Sigmoid colon (tissue), 7 donors: ENCODE measurements at regions of chr9 and their contacts with region 1.

Region 1: GRCh38 chr9:131349881-131350563 is 43.9 kb upstream of the PRRC2B start:
- DNase-seq: peak; percentile 94
- H3K4me3 ChIP-seq: peak overlapping the region in 3 of 4 donors; percentile 20 to 33 (median 30)
- H3K27ac ChIP-seq: peak overlapping the region in 1 of 4 donors; percentile 34
- H3K4me1 ChIP-seq: peaks cover 0 to 9% (median 9%) of the 10 kb centered on the region in 4 donors
- H3K27me3 ChIP-seq: peaks cover 0 to 3% (median 0%) of the 10 kb centered on the region in 3 donors
- CTCF ChIP-seq: peak; percentile 85 to 92 (median 89)
- EP300 ChIP-seq: no peak
- POLR2A ChIP-seq: no peak

Region 2: GRCh38 chr9:131407717-131408195 is 57.7 kb after region 1 on chr9:
- intact Hi-C with region 1: loop called (anchors 5 kb)
- DNase-seq: peak; percentile 80
- H3K4me3 ChIP-seq: peak overlapping the region in 2 of 4 donors; percentile 16 to 26
- H3K27ac ChIP-seq: peak overlapping the region; percentile 74 to 97 (median 96)
- H3K4me1 ChIP-seq: peaks cover 0 to 99% (median 95%) of the 10 kb centered on the region in 4 donors
- H3K27me3 ChIP-seq: no peaks in the 10 kb centered on the region
- CTCF ChIP-seq: peak; percentile 26 to 51 (median 45)
- EP300 ChIP-seq: no peak
- POLR2A ChIP-seq: no peak

Region 3: DNA sequence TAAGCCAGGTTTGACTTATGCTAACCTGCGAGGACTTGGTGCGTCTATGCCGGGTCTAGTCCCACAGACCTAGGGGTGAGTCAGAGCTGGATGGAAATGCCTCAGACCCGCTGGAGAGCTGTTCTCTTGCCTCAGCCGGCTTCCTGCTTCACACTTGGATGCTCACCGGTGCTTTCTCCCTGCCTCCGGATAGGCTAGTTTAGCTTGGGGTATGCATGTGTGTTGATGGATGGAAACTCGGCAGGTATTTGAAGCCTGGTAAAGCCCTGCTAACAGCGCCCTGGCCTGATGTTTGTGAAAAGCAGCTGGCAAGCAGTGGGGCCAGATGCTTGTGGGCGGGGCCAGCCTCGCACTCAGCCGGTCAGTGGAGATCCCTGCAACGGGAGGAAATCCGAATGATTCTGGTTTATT is 73.2 kb after region 1 on chr9:
- intact Hi-C with region 1: loop called (anchors 2 kb)
- DNase-seq: peak; percentile 83
- H3K4me3 ChIP-seq: peak overlapping the region in 2 of 4 donors; percentile 9 to 10
- H3K27ac ChIP-seq: peak overlapping the region; percentile 68 to 84 (median 76)
- H3K4me1 ChIP-seq: peaks cover 0 to 71% (median 62%) of the 10 kb centered on the region in 4 donors
- H3K27me3 ChIP-seq: no peaks in the 10 kb centered on the region
- CTCF ChIP-seq: no peak
- EP300 ChIP-seq: no peak
- POLR2A ChIP-seq: no peak

Region 4: DNA sequence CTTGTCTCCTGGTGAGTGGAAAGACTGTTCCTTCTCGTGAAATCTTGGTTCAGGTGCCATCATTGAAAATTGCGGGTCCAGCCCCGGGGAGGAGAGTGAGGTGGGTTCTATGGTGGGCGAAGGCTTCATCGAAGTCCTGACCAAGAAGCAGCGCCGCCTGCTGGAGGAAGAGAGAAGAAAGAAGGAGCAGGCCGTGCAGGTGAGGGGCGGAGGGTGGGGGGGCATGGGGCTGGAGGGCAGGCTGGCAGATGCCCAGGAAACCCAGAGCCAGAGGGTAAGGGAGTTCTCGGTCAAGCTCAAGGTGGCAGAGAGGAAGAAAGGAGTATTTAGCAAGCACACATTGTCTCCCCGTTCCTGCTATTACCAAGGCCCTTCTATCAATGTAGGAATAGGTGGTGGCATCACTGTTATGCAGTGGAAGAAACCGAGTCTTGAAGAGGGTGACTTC is 128.4 kb after region 1 on chr9:
- intact Hi-C with region 1: loop called (anchors 2 kb)
- DNase-seq: no peak
- H3K4me3 ChIP-seq: no peak overlapping the region
- H3K27ac ChIP-seq: no peak overlapping the region
- H3K4me1 ChIP-seq: peaks cover 0 to 23% (median 9%) of the 10 kb centered on the region in 4 donors
- H3K27me3 ChIP-seq: no peaks in the 10 kb centered on the region
- CTCF ChIP-seq: peak in 3 of 4 experiments; percentile 41 to 57 (median 43)
- EP300 ChIP-seq: no peak
- POLR2A ChIP-seq: no peak

Region 5: DNA sequence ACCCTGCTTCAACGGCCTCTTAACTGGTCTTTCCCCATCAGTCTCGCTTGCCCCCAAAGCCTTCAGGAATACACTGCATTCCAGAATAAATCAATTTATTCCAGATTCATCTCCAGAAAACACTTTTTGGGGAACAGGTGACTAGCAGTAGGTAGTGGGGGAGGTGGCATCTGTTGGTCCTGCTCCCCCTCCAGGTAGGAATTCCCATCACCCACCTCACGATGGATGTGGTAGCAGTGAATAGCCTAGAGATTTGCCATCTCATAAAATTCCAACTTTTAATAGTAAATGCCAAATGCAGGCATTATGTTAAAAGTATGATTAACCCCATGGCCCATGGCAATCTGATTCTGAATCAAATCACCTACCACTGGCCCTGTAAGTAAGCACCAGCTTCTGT is 586.9 kb after region 1 on chr9:
- intact Hi-C with region 1: no loop called
- DNase-seq: no peak
- H3K4me3 ChIP-seq: no peak overlapping the region
- H3K27ac ChIP-seq: no peak overlapping the region
- H3K4me1 ChIP-seq: no peaks in the 10 kb centered on the region
- H3K27me3 ChIP-seq: no peaks in the 10 kb centered on the region
- CTCF ChIP-seq: no peak
- EP300 ChIP-seq: no peak
- POLR2A ChIP-seq: no peak